Activated CD4-positive, alpha-beta memory T cell treated with anti-CD3 and anti-CD28 coated beads for 36 hours (primary cell): ENCODE measurements at regions of chr7 and their contacts with region 1.

Region 1: DNA sequence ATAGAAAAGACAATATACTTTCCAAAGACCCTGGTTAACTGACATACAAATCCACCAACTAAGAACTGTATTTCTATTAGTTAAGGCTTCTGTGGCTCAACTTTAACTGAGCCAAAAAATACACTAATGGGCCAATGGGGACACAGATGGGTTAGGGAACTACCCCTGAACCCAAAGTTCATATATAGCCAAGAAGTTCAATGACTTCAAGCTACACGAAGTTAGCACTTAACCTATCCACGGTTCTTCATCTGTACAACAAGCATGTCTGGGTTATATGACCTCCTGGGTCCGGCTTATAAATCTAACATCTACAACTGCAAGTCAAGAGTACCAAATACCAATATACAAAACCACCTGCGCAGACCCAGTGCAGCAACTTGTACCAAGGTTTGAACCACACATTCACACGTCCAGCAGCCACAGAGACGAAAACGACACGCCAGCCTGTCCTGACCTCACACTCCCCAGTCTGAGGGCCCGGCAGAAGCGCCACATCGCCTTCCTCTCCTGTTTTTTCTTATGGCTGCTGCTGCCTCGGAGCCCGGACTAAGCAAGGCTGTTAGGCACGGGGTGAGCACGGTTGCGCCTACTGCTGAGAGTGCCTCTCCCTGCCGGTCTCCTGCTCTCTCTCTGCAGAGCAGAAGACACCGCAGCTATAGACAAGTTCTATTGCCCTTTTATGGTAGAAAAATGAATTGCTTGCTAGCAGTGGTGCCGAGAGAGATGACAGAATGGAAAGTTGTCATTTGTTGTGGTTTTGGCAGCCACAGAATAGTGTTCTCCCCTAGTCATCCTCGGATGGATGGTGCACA is 86.3 kb downstream of the RNF216 start:
- DNase-seq: peak; percentile 87
- H3K4me3 Mint-ChIP-seq: peak overlapping the region; percentile 80
- H3K27ac Mint-ChIP-seq: peak overlapping the region; percentile 90
- H3K4me1 Mint-ChIP-seq: peaks cover 98% of the 10 kb centered on the region
- H3K27me3 Mint-ChIP-seq: no peaks in the 10 kb centered on the region

Region 2: DNA sequence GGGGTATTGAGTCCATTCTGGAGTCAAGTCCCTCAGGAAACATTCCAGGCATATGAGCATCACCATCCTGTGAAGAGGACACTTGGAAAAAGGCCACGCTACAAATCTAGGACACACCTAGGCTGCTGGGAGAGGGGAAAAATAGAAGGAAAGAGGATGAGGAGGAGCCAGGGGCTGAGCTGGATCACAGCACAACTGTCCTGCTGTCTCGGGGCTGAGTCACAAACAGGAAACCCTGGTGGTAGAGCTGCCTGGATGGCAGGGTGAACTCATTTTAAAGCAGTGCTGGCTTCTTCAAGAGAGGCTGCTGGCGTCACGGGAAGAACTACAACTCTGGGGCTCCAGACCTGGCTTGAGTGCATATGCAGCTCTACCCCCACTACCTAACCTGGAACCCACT is 65.2 kb before region 1 on chr7:
- CTCF ChIA-PET with region 1: no interaction called
- POLR2A ChIA-PET with region 1: no interaction called
- intact Hi-C with region 1: loop called (anchors 2 kb)
- DNase-seq: peak; percentile 72
- H3K4me3 Mint-ChIP-seq: no peak overlapping the region
- H3K27ac Mint-ChIP-seq: peak overlapping the region; percentile 76
- H3K4me1 Mint-ChIP-seq: peaks cover 31% of the 10 kb centered on the region
- H3K27me3 Mint-ChIP-seq: no peaks in the 10 kb centered on the region

Region 3: DNA sequence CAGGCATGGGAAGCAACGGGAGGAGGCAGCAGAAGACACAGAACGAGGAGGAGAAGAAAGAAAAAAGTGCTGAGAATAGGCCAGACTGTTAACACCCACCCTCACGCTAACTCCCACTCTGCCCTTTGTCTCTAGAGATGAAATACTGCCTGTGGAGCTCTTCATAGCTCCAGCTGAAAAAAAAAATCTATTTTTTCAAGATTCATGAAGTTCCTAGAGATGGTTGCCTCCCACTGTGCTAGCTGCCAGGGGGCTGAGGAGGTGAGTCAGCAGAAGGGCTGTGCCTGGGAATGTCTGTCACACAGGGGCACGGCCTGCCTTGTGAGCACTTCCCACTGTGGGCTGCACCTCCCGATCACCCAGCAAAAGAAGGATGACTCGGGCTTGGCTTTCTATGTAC is 58.2 kb before region 1 on chr7:
- CTCF ChIA-PET with region 1: no interaction called
- POLR2A ChIA-PET with region 1: no interaction called
- intact Hi-C with region 1: loop called (anchors 2 kb)
- DNase-seq: no peak
- H3K4me3 Mint-ChIP-seq: no peak overlapping the region
- H3K27ac Mint-ChIP-seq: no peak overlapping the region
- H3K4me1 Mint-ChIP-seq: peaks cover 15% of the 10 kb centered on the region
- H3K27me3 Mint-ChIP-seq: no peaks in the 10 kb centered on the region